Right ventricle myocardium superior (tissue), 1 donor: ENCODE measurements at regions of chr1 and their contacts with region 1.

Region 1: GRCh38 chr1:150176593-150176992 is 26.9 kb downstream of the PLEKHO1 start:
- DNase-seq: no peak
- ATAC-seq: peak; percentile 38

Region 2: DNA sequence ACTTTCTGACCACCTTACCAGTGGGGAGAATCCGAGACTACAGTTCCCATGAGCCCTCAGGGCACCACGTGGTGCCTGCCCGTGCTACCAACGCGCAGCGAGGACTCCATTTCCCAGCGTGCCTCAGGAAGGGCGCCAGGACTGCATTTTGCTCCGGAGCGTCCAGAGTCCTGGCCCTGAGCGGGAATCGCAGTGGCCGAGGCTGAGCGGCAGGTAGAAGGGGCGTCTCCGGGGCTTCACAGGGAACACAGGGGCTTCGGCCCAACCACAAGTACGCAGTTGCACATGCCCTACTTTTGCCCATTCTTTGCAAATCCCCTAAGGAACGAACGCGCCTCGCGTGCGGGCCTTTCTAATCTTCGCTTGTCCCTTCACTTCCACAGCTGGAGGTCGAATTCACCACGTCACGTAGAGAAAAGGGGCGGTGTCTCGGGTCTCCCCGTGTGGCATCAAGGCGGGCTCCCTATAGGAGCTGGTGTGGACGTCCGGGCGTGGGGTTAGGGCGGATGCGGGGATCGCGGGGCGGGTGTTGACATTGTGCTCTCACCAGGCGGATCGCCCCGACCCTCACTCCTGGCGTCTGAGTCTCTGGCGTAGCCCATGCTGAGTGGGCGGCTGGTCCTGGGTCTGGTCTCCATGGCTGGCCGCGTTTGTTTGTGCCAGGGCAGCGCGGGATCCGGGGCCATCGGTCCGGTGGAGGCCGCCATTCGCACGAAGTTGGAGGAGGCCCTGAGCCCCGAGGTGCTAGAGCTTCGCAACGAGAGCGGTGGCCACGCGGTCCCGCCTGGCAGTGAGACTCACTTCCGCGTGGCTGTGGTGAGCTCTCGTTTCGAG is 276.9 kb before region 1 on chr1 and contains the start of gene BOLA1:
- intact Hi-C with region 1: loop called (anchors 10 kb)
- DNase-seq: peak; percentile 95
- ATAC-seq: peak; percentile 100
- total RNA-seq, gene BOLA1: 16.9 TPM

Region 3: DNA sequence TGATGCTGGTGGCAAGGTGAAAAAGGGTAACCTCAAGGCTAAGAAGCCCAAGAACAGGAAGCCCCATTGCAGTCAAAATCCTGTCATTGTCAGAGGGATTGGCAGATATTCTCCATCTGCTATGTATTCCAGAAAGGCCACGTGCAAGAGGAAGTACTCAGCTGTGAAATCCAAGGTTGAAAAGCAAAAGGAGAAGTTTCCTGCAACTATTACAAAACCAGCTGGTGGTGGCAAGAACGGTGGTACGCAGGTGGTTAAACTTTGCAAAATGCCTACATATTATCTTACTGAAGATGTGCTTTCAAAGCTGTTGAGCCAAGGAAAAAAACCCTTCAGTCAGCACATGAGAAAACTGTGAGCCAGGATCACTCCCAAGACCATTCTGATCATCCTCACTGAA is 122.7 kb before region 1 on chr1:
- intact Hi-C with region 1: no loop called
- DNase-seq: no peak
- ATAC-seq: no peak

Region 4: DNA sequence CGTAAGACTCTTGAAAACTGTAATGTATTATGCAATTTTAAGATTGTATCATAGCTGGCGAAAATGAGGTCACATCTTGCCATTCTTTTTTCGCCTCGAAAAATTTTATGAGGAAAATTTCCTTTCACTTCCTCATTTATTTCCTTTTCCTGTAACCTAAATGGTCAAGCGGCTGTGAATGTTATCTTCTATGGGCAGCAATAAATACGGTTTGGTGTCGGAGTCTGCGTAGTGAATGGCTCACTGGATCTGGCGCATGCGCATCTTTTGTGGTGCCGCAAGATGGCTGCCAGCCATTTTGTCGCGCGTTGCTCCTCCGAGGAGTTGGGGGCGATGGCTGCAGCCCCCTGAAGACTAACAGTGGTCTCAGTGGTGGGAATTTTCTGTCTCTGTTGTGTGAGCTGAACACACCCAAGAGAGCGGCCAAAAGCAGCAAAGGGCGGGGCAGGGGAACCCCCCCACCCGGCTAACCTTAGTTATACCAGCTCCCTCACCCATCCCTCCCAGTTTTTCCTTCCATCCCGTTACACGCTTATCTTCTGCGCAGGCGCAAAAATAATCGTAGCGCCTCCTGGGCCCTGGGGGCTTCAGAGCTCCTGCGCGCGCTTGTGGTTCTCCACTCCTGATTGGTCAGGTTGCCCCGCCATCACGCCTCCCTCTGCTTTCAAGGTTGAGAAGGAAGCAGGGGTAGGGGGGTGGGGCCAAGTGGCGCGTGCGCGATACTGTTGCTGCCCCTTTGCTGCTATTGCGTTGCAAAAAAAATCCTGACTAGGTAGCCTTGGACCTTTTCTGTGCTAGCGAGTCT is 187.0 kb after region 1 on chr1 and contains the start of gene RPRD2:
- intact Hi-C with region 1: no loop called
- DNase-seq: peak; percentile 99
- ATAC-seq: peak; percentile 98
- total RNA-seq, gene RPRD2: 20.8 TPM

Region 5: GRCh38 chr1:150429805-150430204 is 253.2 kb after region 1 on chr1:
- intact Hi-C with region 1: no loop called
- DNase-seq: no peak
- ATAC-seq: no peak